ENCODE measurements at regions of chr3 and their contacts with region 1.

Region 1: GRCh38 chr3:42613462-42613861 is 13.0 kb downstream of the NKTR start:
- DNase-seq: no peak
- H3K4me3 ChIP-seq: no peak overlapping the region
- H3K4me3 Mint-ChIP-seq: peak overlapping the region in 4 of 8 donors; percentile 0 to 14 (median 2)
- H3K27ac ChIP-seq: no peak overlapping the region
- H3K27ac Mint-ChIP-seq: peak overlapping the region in 6 of 7 donors; percentile 0 to 93 (median 46)
- H3K4me1 ChIP-seq: peaks cover 54% of the 10 kb centered on the region
- H3K4me1 Mint-ChIP-seq: peaks cover 39 to 73% (median 54%) of the 10 kb centered on the region in 4 donors
- H3K27me3 ChIP-seq: no peaks in the 10 kb centered on the region
- H3K27me3 Mint-ChIP-seq: no peaks in the 10 kb centered on the region

Region 2: DNA sequence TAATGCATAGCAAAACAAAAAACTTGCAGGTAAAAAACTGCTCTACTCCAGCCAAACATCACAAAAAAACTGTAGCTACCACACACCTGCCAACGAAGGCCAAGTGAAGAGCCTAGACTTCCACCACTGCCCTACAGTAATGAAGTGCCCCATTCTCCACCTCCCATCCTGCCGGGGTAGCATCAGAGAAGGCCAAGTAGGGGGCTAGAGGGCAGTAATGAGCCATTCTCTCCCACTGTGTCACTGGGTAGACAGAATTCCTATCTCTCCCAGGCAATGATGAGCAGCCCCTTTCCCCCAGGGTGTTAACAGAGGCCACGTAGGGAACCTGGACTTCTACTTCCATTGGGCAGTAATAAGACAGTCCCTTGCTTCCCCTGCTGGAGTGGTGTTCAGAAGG is 41.2 kb before region 1 on chr3:
- CTCF ChIA-PET with region 1: interaction called, 4 read pairs
- POLR2A ChIA-PET with region 1: no interaction called
- intact Hi-C with region 1: loop called (anchors 5 kb)
- DNase-seq: peak in 1 of 5 donors; percentile 18
- H3K4me3 ChIP-seq: no peak overlapping the region
- H3K4me3 Mint-ChIP-seq: no peak overlapping the region
- H3K27ac ChIP-seq: no peak overlapping the region
- H3K27ac Mint-ChIP-seq: peak overlapping the region in 3 of 7 donors; percentile 48 to 80 (median 76)
- H3K4me1 ChIP-seq: peaks cover 3% of the 10 kb centered on the region
- H3K4me1 Mint-ChIP-seq: peaks cover 11 to 38% (median 24%) of the 10 kb centered on the region in 4 donors
- H3K27me3 ChIP-seq: no peaks in the 10 kb centered on the region
- H3K27me3 Mint-ChIP-seq: no peaks in the 10 kb centered on the region

Region 3: DNA sequence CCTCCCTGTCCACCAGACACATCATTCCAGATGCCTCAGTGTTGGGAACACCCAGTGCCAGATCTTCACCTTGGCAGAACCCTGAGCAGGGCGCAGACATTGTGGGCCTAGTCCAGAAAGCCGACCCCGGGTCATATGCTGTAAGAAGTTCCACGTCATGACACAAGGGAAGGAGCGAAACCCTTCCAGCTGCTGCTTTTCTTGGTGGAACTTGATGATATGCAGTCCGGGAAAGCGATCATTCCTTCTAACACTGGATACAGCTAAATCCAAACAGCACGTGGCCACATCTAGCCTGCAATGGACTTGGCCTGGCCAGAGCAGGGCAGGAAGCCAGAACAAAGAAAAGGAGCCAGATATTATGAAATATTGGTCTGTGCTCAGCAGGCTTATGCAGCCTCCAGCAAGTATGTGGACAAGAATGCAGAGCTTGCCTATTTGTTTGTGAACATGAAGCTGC is 387.7 kb after region 1 on chr3:
- CTCF ChIA-PET with region 1: no interaction called
- POLR2A ChIA-PET with region 1: no interaction called
- intact Hi-C with region 1: no loop called
- DNase-seq: no peak
- H3K4me3 ChIP-seq: no peak overlapping the region
- H3K4me3 Mint-ChIP-seq: no peak overlapping the region
- H3K27ac ChIP-seq: no peak overlapping the region
- H3K27ac Mint-ChIP-seq: no peak overlapping the region
- H3K4me1 ChIP-seq: no peaks in the 10 kb centered on the region
- H3K4me1 Mint-ChIP-seq: peaks cover 0 to 9% (median 3%) of the 10 kb centered on the region in 4 donors
- H3K27me3 ChIP-seq: no peaks in the 10 kb centered on the region
- H3K27me3 Mint-ChIP-seq: peaks cover 0 to 2% of the 10 kb centered on the region in 2 donors